PC-3 (cell line): ENCODE measurements at regions of chr17 and their contacts with region 1.

Region 1: GRCh38 chr17:82410014-82410716 is 8.0 kb upstream of the HEXD start:
- DNase-seq: no peak
- ATAC-seq: no peak
- H3K4me3 ChIP-seq: no peak overlapping the region
- H3K27ac ChIP-seq: no peak overlapping the region
- H3K4me1 ChIP-seq: no peaks in the 10 kb centered on the region
- H3K27me3 ChIP-seq: no peaks in the 10 kb centered on the region
- CTCF ChIP-seq: no peak

Region 2: GRCh38 chr17:82446124-82447048 is 36.2 kb after region 1 on chr17:
- CTCF ChIA-PET with region 1: no interaction called
- POLR2A ChIA-PET with region 1: interaction called, 19 read pairs
- intact Hi-C with region 1: no loop called
- DNase-seq: no peak
- ATAC-seq: no peak
- H3K4me3 ChIP-seq: no peak overlapping the region
- H3K27ac ChIP-seq: no peak overlapping the region
- H3K4me1 ChIP-seq: peaks cover 13% of the 10 kb centered on the region
- H3K27me3 ChIP-seq: no peaks in the 10 kb centered on the region
- CTCF ChIP-seq: no peak

Region 3: DNA sequence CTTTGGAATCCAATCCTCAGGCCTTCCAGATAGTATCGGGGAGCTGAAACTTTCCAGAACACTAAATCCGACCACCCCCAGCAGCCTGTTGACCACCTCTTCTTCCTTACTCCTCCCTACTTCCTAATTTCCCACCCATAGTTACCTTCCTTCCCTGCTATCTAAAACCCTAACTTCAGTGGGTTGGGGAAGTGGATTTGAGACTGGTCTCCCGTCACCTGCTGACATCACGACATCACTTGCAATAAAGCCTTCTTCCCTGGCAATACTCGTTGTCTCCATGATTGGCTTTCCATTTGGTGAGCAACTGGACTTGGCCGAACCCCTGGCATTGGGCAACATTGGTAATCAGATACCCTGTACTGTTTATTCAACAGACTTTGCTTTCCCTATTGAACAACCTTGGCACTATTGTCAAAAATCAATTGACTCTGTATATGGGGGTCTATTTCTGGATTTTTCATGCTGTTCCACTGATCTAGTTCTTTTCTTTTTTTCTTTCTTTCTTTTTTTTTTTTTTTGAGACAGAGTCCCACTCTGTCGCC is 97.5 kb after region 1 on chr17:
- CTCF ChIA-PET with region 1: no interaction called
- POLR2A ChIA-PET with region 1: no interaction called
- intact Hi-C with region 1: no loop called
- DNase-seq: no peak
- ATAC-seq: no peak
- H3K4me3 ChIP-seq: no peak overlapping the region
- H3K27ac ChIP-seq: no peak overlapping the region
- H3K4me1 ChIP-seq: no peaks in the 10 kb centered on the region
- H3K27me3 ChIP-seq: no peaks in the 10 kb centered on the region
- CTCF ChIP-seq: no peak